ENCODE measurements at regions of chr16 and their contacts with region 1.

Region 1: DNA sequence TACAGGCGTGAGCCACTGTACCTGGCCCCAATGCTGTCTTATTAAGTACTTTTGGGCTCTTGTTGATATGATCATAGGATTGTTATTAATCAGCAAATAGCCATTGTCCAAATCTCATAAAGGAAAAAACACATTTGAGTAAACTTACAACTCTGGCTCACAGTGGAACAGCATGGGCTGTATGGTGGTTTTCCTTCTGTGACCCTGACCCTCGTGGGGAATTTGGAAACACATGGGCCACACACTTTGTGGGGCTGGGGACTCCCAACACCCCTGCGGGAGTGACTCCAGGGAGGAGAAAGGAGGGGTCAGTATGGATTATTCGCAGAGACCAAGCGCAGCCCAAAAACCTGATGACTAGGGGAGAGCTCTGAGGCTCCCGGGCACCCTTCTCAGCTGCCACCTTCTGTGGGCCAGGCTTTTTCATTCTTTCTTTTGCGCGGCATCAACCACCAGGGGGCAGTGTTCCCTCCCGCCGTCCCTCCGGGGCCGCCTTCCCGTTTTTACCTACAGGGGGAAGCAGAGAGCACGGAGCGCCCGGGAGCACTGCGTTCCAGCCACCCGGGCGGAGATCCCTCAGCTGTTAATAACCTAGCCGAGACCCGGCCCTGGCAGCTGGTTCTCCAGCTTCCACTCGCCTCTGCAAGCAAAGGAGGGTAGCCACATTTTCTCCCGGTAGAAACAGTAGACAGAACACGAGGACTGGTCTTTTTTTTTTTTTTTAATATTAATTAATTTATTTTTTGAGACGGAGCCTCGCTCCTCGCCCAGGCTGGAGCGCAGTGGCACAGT is 9.7 kb downstream of the TSNAXIP1 start:
- DNase-seq: peak; percentile 43
- ATAC-seq: peak; percentile 94
- H3K4me3 ChIP-seq: no peak overlapping the region
- H3K27ac ChIP-seq: no peak overlapping the region
- H3K4me1 ChIP-seq: peaks cover 0 to 3% of the 10 kb centered on the region in 2 experiments; a peak in 1 of 4 replicates
- H3K27me3 ChIP-seq: no peaks in the 10 kb centered on the region
- CTCF ChIP-seq: peak; percentile 100
- POLR2A ChIP-seq: no peak
- RAD21 ChIP-seq: peak; percentile 88

Region 2: DNA sequence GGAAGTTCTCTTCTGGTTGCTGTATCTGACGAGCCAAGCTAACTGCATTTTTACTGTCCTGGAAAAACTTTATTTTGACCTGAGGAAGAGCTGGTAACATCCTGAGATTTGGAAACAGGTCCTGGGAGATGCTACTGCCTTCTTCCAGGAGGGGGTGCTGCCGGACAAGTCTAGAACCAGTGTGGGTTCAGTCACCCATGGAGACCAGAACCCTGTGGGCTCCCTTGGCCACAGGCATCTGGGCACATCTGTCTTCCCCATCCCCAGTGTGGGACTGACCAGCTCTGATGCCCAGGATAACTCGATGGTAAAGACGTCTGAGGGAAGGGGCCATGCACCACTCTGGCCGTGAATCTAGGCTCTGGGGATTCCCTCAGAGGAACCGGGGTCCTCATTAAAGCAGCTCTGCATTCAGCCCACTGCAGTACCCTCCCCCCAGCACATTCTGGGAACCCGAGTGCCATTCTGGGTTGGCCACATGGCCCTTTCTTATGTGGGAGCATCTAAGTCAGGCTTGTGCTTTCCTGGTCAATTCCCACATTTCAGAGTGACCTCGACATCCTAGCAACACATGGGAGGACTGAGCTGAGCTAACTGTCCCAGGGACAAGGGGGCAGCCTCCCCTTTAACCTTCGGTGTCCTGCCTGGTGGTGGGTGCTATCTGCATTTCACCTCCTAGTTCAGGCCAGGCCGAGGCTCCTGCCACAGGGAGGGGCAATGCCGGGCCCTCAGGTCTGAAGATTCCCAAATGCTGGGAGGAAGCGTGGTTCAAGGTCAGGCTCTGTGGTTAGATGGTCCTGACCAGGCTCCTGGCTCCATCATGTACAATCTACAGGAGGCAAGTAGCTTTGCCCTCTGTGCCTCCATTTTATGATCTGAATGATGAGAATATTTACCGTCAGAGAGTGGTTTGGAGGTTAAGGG is 143.4 kb before region 1 on chr16:
- CTCF ChIA-PET with region 1: interaction called, 11 read pairs
- POLR2A ChIA-PET with region 1: no interaction called
- RAD21 ChIA-PET with region 1: no interaction called
- intact Hi-C with region 1: no loop called
- DNase-seq: peak; percentile 42
- ATAC-seq: peak; percentile 63
- H3K4me3 ChIP-seq: no peak overlapping the region
- H3K27ac ChIP-seq: no peak overlapping the region
- H3K4me1 ChIP-seq: peaks cover 0 to 10% of the 10 kb centered on the region in 2 experiments; a peak in 2 of 4 replicates
- H3K27me3 ChIP-seq: no peaks in the 10 kb centered on the region
- CTCF ChIP-seq: peak; percentile 78 to 92 (median 90); a peak in 5 of 6 replicates
- POLR2A ChIP-seq: no peak
- RAD21 ChIP-seq: peak; percentile 93

Region 3: GRCh38 chr16:67833418-67834241 is 17.2 kb after region 1 on chr16:
- CTCF ChIA-PET with region 1: interaction called, 31 read pairs
- POLR2A ChIA-PET with region 1: interaction called, 3 read pairs
- RAD21 ChIA-PET with region 1: no interaction called
- intact Hi-C with region 1: no loop called
- DNase-seq: peak; percentile 69
- ATAC-seq: peak; percentile 99
- H3K4me3 ChIP-seq: peak overlapping the region; percentile 90 to 93
- H3K27ac ChIP-seq: peak overlapping the region; percentile 23
- H3K4me1 ChIP-seq: peaks cover 3 to 13% of the 10 kb centered on the region in 2 experiments; a peak in 3 of 4 replicates
- H3K27me3 ChIP-seq: no peaks in the 10 kb centered on the region
- CTCF ChIP-seq: no peak
- POLR2A ChIP-seq: peak; percentile 75
- RAD21 ChIP-seq: no peak

Region 4: DNA sequence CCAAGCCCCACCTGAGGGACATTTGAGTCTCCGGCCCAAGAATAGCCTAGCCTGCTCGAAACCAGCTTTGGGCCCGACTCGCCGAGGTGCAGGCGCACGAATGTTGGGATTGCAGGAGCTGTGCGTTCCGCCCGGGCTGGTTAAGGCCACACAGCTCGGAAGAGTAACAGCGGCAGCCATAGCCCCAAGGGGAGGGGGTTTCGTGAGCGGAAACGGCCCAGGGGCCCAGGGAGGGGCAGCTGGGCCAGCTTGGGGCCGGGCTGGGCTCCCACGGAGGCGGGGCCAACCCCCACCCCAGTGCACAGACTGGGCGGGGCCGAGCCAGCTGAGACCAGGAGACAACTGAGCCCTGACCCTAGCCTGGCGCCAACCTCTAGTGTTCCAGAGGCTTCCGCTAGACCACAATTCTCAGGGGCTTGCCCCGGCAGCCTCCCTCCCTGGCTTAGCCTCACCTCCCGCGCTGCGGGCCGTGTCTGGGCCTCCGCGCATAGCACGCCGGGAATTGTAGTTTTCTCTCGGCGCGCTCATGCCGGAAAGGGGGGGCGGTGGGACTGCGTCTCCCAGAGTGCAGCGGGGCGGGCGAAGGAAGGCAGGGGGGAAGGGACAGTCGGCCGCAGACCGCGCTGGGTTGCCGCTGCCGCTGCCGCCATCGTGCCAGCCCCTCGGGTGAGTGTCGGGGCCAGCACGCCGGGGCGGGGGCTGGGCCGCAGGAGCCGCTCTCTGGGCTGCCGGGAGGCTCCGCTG is 30.1 kb after region 1 on chr16 and contains the start of gene NUTF2:
- CTCF ChIA-PET with region 1: interaction called, 18 read pairs
- POLR2A ChIA-PET with region 1: no interaction called
- RAD21 ChIA-PET with region 1: no interaction called
- intact Hi-C with region 1: no loop called
- DNase-seq: peak; percentile 81
- ATAC-seq: peak; percentile 76
- H3K4me3 ChIP-seq: peak within 1 kb of the TSS; percentile 83 to 96
- H3K27ac ChIP-seq: peak within 1 kb of the TSS; percentile 83
- H3K4me1 ChIP-seq: peaks cover 16 to 48% of the 10 kb centered on the region in 2 experiments
- H3K27me3 ChIP-seq: no peaks in the 10 kb centered on the region
- CTCF ChIP-seq: no peak
- POLR2A ChIP-seq: no peak
- RAD21 ChIP-seq: no peak
- total RNA-seq, gene NUTF2: 145 TPM

Region 5: DNA sequence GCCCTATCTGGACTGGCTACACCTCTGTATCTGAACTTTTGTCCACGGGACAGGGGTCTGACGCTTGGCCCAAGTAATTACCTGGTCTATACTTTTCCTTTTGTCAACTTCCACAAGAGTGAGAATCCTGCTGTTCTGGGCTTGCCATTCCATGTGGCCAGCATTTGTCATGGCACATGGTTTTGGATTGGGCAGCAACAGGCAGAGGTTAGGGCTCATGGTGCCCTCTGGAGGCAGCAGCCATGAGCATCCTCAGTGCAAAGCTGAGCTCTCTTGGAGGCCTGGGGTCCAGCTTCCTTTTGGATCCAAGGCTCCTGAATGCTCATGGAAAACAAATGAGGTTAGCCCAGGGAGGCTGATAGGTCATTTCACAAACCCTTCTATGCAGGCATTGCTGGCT is 48.9 kb after region 1 on chr16:
- CTCF ChIA-PET with region 1: interaction called, 18 read pairs
- POLR2A ChIA-PET with region 1: interaction called, 4 read pairs
- RAD21 ChIA-PET with region 1: interaction called in 1 of 2 experiments, 8 read pairs
- intact Hi-C with region 1: loop called (anchors 1 kb)
- DNase-seq: no peak
- ATAC-seq: peak; percentile 90
- H3K4me3 ChIP-seq: no peak overlapping the region
- H3K27ac ChIP-seq: peak overlapping the region; percentile 0; the same call in 1 of the 2 replicates
- H3K4me1 ChIP-seq: peaks cover 8 to 42% of the 10 kb centered on the region in 2 experiments; a peak in 3 of 4 replicates
- H3K27me3 ChIP-seq: no peaks in the 10 kb centered on the region
- CTCF ChIP-seq: peak; percentile 55 to 84 (median 59); a peak in 5 of 6 replicates
- POLR2A ChIP-seq: no peak
- RAD21 ChIP-seq: peak; percentile 72

Region 6: GRCh38 chr16:67935402-67936123 is 119.1 kb after region 1 on chr16:
- CTCF ChIA-PET with region 1: interaction called, 6 read pairs
- POLR2A ChIA-PET with region 1: no interaction called
- RAD21 ChIA-PET with region 1: no interaction called
- intact Hi-C with region 1: loop called (anchors 5 kb)
- DNase-seq: peak; percentile 93
- ATAC-seq: peak; percentile 95
- H3K4me3 ChIP-seq: peak overlapping the region; percentile 70 to 82
- H3K27ac ChIP-seq: peak overlapping the region; percentile 83
- H3K4me1 ChIP-seq: peaks cover 3 to 30% of the 10 kb centered on the region in 2 experiments; a peak in 3 of 4 replicates
- H3K27me3 ChIP-seq: no peaks in the 10 kb centered on the region
- CTCF ChIP-seq: no peak
- POLR2A ChIP-seq: peak; percentile 67
- RAD21 ChIP-seq: no peak